ENCODE measurements at regions of chr14 and their contacts with region 1.

Region 1: GRCh38 chr14:26984311-26985177 is 386.7 kb upstream of the NOVA1 start:
- DNase-seq: peak; percentile 67
- H3K4me3 ChIP-seq: no peak overlapping the region
- H3K27ac ChIP-seq: no peak overlapping the region
- H3K4me1 ChIP-seq: no peaks in the 10 kb centered on the region
- H3K27me3 ChIP-seq: no peaks in the 10 kb centered on the region
- CTCF ChIP-seq: peak; percentile 49

Region 2: GRCh38 chr14:26163791-26164190 is 820.8 kb before region 1 on chr14:
- intact Hi-C with region 1: loop called (anchors 10 kb)
- DNase-seq: no peak
- H3K4me3 ChIP-seq: no peak overlapping the region
- H3K27ac ChIP-seq: no peak overlapping the region
- H3K4me1 ChIP-seq: no peaks in the 10 kb centered on the region
- H3K27me3 ChIP-seq: no peaks in the 10 kb centered on the region
- CTCF ChIP-seq: peak; percentile 27

Region 3: DNA sequence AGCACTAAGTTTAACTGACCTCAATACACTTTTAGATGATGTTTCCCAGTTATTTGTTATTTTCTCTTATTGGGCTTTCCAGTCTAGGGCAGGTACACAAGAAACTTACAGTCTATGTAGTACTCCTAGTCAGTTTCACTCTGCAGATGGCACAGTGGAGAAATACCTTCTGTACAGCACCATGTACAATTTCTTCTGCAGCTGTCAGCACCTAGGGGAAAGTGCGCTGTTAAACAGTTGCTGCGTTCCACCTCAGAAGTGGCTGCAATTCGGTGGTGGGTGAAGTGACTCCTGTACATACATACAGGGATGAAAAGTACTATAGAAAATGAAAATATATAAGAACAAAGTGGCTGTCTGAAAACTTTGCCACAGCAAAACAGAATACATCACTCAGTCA is 435.0 kb before region 1 on chr14:
- intact Hi-C with region 1: no loop called
- DNase-seq: no peak
- H3K4me3 ChIP-seq: no peak overlapping the region
- H3K27ac ChIP-seq: no peak overlapping the region
- H3K4me1 ChIP-seq: no peaks in the 10 kb centered on the region
- H3K27me3 ChIP-seq: no peaks in the 10 kb centered on the region
- CTCF ChIP-seq: no peak

Region 4: DNA sequence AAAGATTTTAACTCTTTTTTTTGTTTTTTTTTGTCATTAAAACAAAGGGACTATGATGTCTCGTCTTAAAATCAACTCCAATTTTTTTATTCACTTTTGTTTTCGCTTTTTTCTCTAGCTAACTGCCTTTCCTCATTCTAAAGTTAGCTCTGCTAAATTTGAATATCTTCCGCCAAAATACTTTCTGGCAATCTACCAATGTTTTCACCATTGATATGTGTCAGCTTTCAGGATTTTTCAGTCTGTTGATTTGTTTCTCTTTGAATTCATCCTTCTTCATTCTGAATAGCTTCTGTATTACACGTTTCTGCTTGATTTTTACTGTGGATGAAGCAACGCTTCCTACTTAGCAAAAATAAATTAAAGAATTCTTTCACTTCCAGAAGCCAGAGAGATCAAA is 348.0 kb before region 1 on chr14:
- intact Hi-C with region 1: no loop called
- DNase-seq: no peak
- H3K4me3 ChIP-seq: no peak overlapping the region
- H3K27ac ChIP-seq: no peak overlapping the region
- H3K4me1 ChIP-seq: no peaks in the 10 kb centered on the region
- H3K27me3 ChIP-seq: no peaks in the 10 kb centered on the region
- CTCF ChIP-seq: no peak

Region 5: DNA sequence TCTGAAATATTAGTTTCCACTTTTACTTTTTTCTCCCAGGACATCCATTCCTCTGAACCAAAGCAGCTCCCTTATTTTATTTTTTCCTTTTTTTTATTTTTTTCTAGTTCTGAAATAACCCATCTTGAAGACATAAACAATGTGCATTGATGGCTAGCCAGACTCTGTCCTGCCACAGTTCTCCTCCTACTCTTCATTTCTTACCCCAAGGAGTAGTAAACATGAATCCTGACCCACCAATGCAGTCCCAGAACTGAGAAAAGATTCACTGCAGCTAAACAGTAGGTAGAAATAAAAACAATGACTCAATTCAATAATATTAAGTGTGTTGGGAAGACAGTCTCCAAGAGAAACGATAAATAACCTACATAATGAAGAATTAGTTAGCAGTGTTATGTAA is 321.0 kb before region 1 on chr14:
- intact Hi-C with region 1: no loop called
- DNase-seq: no peak
- H3K4me3 ChIP-seq: no peak overlapping the region
- H3K27ac ChIP-seq: no peak overlapping the region
- H3K4me1 ChIP-seq: no peaks in the 10 kb centered on the region
- H3K27me3 ChIP-seq: no peaks in the 10 kb centered on the region
- CTCF ChIP-seq: no peak

Region 6: GRCh38 chr14:26775765-26776563 is 208.6 kb before region 1 on chr14:
- intact Hi-C with region 1: no loop called
- DNase-seq: no peak
- H3K4me3 ChIP-seq: no peak overlapping the region
- H3K27ac ChIP-seq: no peak overlapping the region
- H3K4me1 ChIP-seq: no peaks in the 10 kb centered on the region
- H3K27me3 ChIP-seq: no peaks in the 10 kb centered on the region
- CTCF ChIP-seq: no peak

Measured in colonic mucosa (tissue), 4 donors.